ENCODE measurements at regions of chr11 and their contacts with region 1.

Region 1: DNA sequence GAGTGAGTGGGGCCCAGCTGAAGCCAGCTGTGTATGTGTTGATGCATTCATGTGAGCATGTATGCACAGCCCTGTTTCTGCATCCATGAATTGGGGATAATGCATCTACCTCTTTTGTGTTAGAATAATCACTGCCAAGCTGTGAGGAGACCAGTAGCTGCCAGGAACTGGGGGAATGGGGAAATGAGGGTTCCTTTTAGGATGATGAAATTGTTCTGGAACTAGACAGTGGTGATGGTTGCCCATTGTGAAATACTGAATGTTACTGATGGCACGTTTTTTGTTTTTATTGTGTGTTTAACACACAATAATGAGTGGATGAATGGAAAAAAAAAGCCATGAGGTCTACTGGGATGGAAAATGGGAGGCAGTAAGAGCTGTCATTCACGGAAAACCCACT is 45.3 kb upstream of the WNT11 start:
- DNase-seq: no peak
- ATAC-seq: no peak
- H3K4me3 ChIP-seq: no peak overlapping the region
- H3K4me3 Mint-ChIP-seq: no peak overlapping the region
- H3K27ac ChIP-seq: no peak overlapping the region
- H3K27ac Mint-ChIP-seq: no peak overlapping the region
- H3K4me1 ChIP-seq: no peaks in the 10 kb centered on the region
- H3K4me1 Mint-ChIP-seq: no peaks in the 10 kb centered on the region
- H3K27me3 ChIP-seq: peaks cover 0 to 36% of the 10 kb centered on the region in 2 experiments
- H3K27me3 Mint-ChIP-seq: peaks cover 0 to 3% of the 10 kb centered on the region in 2 donors

Region 2: DNA sequence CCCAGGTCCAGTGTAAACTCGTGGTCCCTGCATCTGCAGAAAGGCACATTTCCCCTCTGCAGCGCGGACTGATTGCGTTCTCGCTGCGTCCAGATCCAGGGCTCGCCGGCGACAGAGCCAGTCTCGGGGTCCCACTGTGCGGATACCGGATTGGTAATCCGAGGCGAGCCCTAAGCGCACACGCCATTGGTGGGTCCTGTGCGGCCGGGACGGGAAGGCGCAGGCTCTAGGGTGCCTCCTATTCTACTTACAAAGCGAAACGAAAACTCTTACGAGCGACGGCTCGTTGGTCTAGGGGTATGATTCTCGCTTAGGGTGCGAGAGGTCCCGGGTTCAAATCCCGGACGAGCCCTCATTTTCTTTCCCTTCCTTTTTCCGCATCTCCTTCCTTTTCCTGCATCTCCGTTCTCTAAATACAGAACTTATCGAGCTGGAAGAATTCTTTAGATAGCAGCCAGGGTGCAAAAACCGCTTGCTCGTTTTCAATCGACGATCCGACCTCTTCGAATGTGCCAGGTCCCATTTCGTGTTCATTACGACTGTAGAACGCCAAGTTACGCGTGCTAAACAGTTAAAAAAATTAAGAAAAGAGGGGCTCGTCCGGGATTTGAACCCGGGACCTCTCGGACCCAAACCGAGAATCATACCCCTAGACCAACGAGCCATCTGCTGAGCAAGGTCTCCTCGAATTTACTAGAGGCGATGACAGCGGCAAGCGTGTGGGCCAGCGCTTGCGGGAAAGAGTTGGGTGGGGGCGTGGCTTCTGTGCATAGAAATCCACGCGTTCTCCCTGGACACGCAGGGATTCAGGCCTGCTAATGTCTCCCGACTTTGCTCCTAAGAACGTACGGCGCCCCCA is 16.1 kb before region 1 on chr11:
- CTCF ChIA-PET with region 1: interaction called in 1 of 2 experiments, 14 read pairs
- POLR2A ChIA-PET with region 1: no interaction called
- DNase-seq: peak; percentile 72 to 95 (median 86)
- ATAC-seq: peak; percentile 79 to 88 (median 82)
- H3K4me3 ChIP-seq: peak overlapping the region; percentile 84 to 93
- H3K4me3 Mint-ChIP-seq: peak overlapping the region; percentile 90 to 93 (median 93)
- H3K27ac ChIP-seq: peak overlapping the region; percentile 35
- H3K27ac Mint-ChIP-seq: peak overlapping the region; percentile 92
- H3K4me1 ChIP-seq: peaks cover 21 to 58% of the 10 kb centered on the region in 2 experiments
- H3K4me1 Mint-ChIP-seq: peaks cover 40 to 64% (median 54%) of the 10 kb centered on the region in 3 donors
- H3K27me3 ChIP-seq: peaks cover 0 to 2% of the 10 kb centered on the region in 2 experiments
- H3K27me3 Mint-ChIP-seq: peaks cover 0 to 6% of the 10 kb centered on the region in 2 donors

Measured in T-cell (primary cell).